ENCODE measurements at regions of chr11 and their contacts with region 1.

Region 1: GRCh38 chr11:7442588-7443215 is 42.6 kb upstream of the OLFML1 start:
- DNase-seq: peak; percentile 17 to 77 (median 56)
- ATAC-seq: peak; percentile 65 to 81 (median 70)
- H3K4me3 ChIP-seq: no peak overlapping the region
- H3K4me3 Mint-ChIP-seq: no peak overlapping the region
- H3K27ac ChIP-seq: no peak overlapping the region
- H3K27ac Mint-ChIP-seq: no peak overlapping the region
- H3K4me1 ChIP-seq: peaks cover 0 to 4% of the 10 kb centered on the region in 2 experiments
- H3K4me1 Mint-ChIP-seq: peaks cover 0 to 8% (median 3%) of the 10 kb centered on the region in 3 donors
- H3K27me3 ChIP-seq: peaks cover 0 to 10% of the 10 kb centered on the region in 2 experiments
- H3K27me3 Mint-ChIP-seq: peaks cover 0 to 3% of the 10 kb centered on the region in 2 donors

Region 2: GRCh38 chr11:7098235-7098832 is 344.4 kb before region 1 on chr11:
- CTCF ChIA-PET with region 1: interaction called, 3 to 41 read pairs
- POLR2A ChIA-PET with region 1: no interaction called
- DNase-seq: peak in 2 of 35 experiments; percentile 16 to 72
- ATAC-seq: peak in 3 of 4 experiments; percentile 30 to 55 (median 48)
- H3K4me3 ChIP-seq: no peak overlapping the region
- H3K4me3 Mint-ChIP-seq: no peak overlapping the region
- H3K27ac ChIP-seq: no peak overlapping the region
- H3K27ac Mint-ChIP-seq: no peak overlapping the region
- H3K4me1 ChIP-seq: no peaks in the 10 kb centered on the region
- H3K4me1 Mint-ChIP-seq: no peaks in the 10 kb centered on the region
- H3K27me3 ChIP-seq: peaks cover 0 to 2% of the 10 kb centered on the region in 2 experiments
- H3K27me3 Mint-ChIP-seq: peaks cover 11 to 16% of the 10 kb centered on the region in 2 donors